IMR-90 (cell line): ENCODE measurements at regions of chr6 and their contacts with region 1.

Region 1: DNA sequence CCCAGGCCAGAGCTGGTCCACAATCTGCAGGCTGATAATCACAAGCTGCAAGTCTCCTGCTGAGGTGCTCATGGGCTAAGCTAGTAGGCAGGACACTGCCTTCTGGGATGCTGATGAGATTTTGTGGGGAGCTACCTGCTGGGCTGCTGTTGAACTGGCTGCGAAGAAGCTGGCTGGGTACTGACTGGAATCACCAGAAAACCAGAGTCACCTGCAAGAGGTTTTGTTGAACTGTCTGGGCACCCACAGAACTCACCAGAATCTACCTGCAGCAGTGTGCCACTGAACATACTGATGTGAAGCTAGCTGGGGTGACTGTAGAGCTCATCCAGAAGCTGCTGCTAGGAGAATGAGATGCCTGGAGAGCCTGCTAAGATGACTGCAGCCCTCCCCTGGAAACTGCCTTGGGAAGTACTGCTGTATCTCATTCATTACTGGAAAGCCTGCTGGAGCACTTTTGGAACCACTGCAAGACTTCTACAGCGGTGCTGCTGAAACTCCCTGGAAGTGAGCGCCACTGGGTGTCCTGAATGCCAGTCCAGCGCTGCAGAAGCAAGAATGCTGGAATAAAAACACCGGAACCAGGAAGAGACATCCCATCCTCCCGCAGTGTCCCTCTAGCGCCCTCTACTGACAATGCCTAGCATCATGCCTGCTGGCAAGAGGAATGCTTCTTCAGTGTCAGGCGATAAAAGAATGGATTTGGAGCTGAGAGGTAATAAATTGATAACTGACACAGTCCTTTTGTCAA is 64.9 kb upstream of the ARHGAP18 start:
- DNase-seq: peak; percentile 82
- ATAC-seq: peak; percentile 97
- H3K4me3 ChIP-seq: peak overlapping the region; percentile 10; the same call in 1 of the 2 replicates
- H3K27ac ChIP-seq: no peak overlapping the region
- H3K4me1 ChIP-seq: no peaks in the 10 kb centered on the region
- H3K27me3 ChIP-seq: no peaks in the 10 kb centered on the region
- CTCF ChIP-seq: peak; percentile 92
- POLR2A ChIP-seq: no peak
- RAD21 ChIP-seq: peak; percentile 83

Region 2: GRCh38 chr6:128316258-128316929 is 1458.5 kb before region 1 on chr6:
- CTCF ChIA-PET with region 1: no interaction called
- POLR2A ChIA-PET with region 1: no interaction called
- dilution Hi-C with region 1: no loop called
- in situ Hi-C with region 1: no loop called
- intact Hi-C with region 1: no loop called
- DNase-seq: no peak
- ATAC-seq: no peak
- H3K4me3 ChIP-seq: no peak overlapping the region
- H3K27ac ChIP-seq: no peak overlapping the region
- H3K4me1 ChIP-seq: no peaks in the 10 kb centered on the region
- H3K27me3 ChIP-seq: no peaks in the 10 kb centered on the region
- CTCF ChIP-seq: no peak
- POLR2A ChIP-seq: no peak
- RAD21 ChIP-seq: no peak

Region 3: GRCh38 chr6:129440691-129441090 is 334.2 kb before region 1 on chr6:
- CTCF ChIA-PET with region 1: no interaction called
- POLR2A ChIA-PET with region 1: no interaction called
- dilution Hi-C with region 1: no loop called
- in situ Hi-C with region 1: no loop called
- intact Hi-C with region 1: no loop called
- DNase-seq: peak; percentile 20
- ATAC-seq: no peak; the same call in 1 of the 2 replicates
- H3K4me3 ChIP-seq: no peak overlapping the region
- H3K27ac ChIP-seq: no peak overlapping the region
- H3K4me1 ChIP-seq: no peaks in the 10 kb centered on the region
- H3K27me3 ChIP-seq: no peaks in the 10 kb centered on the region
- CTCF ChIP-seq: no peak
- POLR2A ChIP-seq: no peak
- RAD21 ChIP-seq: no peak

Region 4: GRCh38 chr6:129785047-129785755 is 10.3 kb after region 1 on chr6:
- CTCF ChIA-PET with region 1: interaction called, 19 read pairs
- POLR2A ChIA-PET with region 1: no interaction called
- dilution Hi-C with region 1: no loop called
- in situ Hi-C with region 1: no loop called
- intact Hi-C with region 1: no loop called
- DNase-seq: peak; percentile 42
- ATAC-seq: peak; percentile 46; the same call in 1 of the 2 replicates
- H3K4me3 ChIP-seq: no peak overlapping the region
- H3K27ac ChIP-seq: no peak overlapping the region
- H3K4me1 ChIP-seq: peaks cover 4% of the 10 kb centered on the region; the same call in 1 of the 2 replicates
- H3K27me3 ChIP-seq: no peaks in the 10 kb centered on the region
- CTCF ChIP-seq: no peak
- POLR2A ChIP-seq: no peak
- RAD21 ChIP-seq: no peak